Activated CD4-positive, alpha-beta memory T cell treated with anti-CD3 and anti-CD28 coated beads for 36 hours (primary cell): ENCODE measurements at regions of chr19 and their contacts with region 1.

Region 1: DNA sequence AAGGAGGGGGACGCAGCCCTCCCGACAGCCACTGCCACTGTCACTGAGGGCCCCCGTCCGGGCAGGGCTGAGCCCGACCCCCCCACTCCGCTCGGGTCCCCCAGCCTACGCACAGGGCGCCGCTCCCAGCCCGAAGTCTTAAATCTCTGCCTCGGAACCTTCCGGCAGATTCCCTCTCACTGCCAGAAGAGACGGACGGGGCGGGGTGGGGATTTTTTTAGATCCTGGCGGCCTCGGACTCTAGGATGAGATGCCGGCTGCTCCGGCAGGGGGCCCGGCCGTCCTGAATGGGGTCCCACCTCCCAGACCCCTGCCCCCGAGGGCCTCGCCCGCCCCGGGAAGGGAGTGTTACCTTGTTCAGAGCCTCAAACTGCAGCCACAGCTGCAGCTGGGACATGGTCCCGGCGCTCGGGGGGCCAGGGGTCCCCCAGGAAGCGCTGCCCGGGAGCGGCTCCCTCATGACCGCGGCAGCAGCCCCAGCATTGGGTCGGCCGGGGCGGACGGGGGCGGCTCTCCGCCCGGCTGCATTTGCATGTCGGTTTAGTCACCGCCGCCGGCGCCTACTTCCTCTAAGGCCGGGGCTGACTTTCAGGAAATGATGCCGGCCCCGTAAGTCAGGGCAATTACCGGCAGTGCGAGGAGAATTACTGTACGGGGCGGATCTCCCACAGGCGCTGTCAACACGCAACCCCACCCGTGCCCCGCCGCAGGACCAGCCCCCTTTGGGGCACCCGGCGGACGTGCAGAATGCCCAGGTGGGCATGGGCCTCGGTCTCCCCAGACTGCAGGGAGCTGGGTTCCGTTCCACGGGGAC is 28.2 kb downstream of the GPX4 start:
- DNase-seq: peak; percentile 96
- H3K4me3 Mint-ChIP-seq: peak overlapping the region; percentile 94
- H3K27ac Mint-ChIP-seq: peak overlapping the region; percentile 96
- H3K4me1 Mint-ChIP-seq: peaks cover 44% of the 10 kb centered on the region
- H3K27me3 Mint-ChIP-seq: no peaks in the 10 kb centered on the region

Region 2: DNA sequence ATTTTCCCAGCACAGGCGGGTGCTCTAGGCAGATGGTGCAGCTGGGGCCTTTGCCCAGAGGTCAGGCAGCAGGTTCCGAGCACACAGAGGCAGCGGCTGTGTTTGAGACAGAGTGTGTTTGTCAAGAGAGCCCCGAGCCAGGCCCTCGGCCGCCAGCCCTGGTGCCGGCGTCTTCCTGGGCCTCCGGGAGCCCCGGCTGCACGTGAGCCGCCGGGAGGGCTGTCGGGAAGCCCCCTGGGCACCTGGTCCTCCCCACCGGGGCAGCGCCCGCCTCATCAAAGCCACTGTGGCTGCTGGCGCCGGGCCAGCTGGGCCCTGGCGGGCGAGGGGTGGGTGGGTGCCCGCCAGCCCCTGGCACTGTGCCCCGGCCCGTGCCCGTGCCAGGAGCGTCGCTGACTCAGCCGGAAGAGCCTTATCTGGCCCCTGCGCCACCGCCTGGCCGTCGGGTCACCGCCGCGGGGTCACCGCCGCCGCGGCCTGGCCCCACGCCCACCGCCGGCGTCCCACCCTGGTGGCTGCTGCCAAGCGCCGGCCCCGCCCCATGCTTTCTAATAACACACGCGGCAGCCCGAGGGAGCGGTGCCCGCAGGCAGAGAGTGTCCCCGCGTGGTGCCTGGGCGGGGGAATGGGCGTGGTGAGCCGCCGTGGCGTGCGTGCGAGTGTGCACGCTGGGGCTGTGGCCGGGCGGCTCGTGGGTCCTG is 191.2 kb before region 1 on chr19:
- CTCF ChIA-PET with region 1: no interaction called
- POLR2A ChIA-PET with region 1: no interaction called
- intact Hi-C with region 1: no loop called
- DNase-seq: peak; percentile 65
- H3K4me3 Mint-ChIP-seq: peak overlapping the region; percentile 71
- H3K27ac Mint-ChIP-seq: no peak overlapping the region
- H3K4me1 Mint-ChIP-seq: peaks cover 24% of the 10 kb centered on the region
- H3K27me3 Mint-ChIP-seq: no peaks in the 10 kb centered on the region

Region 3: DNA sequence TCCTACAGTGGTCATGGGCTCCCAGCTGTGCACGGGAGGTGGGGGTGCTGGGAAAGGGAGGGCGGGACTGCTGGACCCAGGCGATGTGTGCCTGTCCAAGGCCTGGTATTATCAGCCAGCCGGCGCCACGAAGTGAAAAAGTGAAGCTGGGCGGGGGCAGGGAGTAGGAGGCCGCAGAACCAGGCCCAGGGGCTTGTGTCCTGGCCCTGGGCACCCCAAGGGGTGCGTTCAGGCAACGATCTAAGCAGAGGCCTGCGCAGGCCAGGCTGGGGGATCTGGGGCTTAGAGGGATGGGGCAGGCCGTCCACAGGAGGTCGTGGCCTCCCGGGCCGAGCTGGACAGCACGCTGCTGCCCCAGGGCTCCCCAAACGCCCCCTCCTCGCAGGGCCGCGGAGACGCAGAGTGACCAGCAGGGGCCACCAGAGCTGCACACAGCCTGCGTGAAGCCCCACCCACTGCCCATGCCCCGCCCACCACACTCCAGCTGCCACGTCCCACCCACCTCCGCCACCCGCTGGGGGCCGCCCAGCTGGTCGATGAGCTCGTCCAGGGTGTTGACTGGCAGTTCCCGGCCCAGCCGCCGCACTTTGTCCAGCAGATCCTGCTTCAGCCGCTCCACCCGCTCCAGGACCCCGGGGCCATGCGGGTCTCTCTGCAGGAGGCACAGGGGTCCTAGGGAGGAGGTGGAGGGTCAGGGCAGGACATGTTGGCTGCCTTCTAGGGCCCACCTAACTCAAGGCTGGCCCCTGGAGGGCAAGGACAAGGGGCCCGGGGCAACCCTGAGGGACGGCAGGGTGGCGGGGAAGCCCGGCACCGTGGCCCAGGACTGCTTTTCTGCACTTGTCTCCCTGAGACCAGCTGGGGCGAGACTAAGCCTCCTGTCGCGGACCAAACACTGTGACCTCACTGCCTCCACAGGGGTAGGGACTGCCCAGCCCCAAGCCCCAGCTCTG is 18.6 kb before region 1 on chr19:
- CTCF ChIA-PET with region 1: interaction called, 14 read pairs
- POLR2A ChIA-PET with region 1: interaction called, 7 read pairs
- intact Hi-C with region 1: no loop called
- DNase-seq: peak; percentile 89
- H3K4me3 Mint-ChIP-seq: no peak overlapping the region
- H3K27ac Mint-ChIP-seq: no peak overlapping the region
- H3K4me1 Mint-ChIP-seq: peaks cover 2% of the 10 kb centered on the region
- H3K27me3 Mint-ChIP-seq: no peaks in the 10 kb centered on the region

Region 4: DNA sequence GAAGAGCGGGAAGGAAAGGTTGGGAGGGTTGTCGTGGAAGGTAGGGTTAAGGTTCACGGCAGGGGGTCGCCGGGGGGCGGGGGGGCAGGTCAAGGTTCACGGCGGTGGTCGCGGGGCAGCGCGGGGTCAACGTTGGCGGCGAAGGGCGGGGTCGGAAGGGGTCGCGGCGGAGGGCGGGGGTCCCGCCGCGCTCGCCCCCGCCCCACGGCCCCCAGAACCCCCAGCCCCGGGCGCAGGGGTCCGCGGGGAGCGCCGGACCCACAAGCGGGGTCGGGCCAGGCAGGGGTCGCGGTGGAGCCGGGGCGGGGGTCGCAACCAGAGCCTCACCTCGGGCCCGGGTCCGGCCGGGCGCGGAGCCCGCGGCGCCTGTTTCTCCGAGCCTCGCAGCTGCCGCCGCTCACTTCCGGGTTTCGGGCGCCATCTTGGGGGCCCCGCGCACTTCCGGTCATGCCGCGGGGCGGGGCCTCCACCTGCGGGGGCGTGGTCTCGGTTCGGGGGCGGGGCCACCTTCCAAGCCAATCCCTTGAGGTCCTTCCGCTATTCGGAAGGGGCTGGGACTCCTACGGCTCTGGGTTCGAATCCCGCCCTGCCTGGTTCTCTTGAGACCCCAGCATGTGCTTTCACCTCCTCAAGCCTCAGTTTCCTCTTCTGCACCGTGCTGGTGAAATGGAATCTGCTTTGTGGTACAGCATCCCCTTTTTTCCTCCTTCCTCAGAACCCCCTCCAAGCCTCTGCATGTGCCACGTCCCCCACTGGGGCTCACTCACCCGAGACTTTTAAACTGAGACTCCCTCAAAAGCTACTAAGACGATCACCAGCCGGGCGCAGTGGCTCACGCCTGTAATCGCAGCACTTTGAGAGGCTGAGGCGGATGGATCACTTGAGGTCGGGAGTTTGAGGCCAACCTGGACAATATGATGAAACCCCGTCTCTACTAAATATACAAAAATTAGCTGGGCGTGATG is 42.2 kb after region 1 on chr19 and contains the start of gene SBNO2:
- CTCF ChIA-PET with region 1: interaction called, 6 read pairs
- POLR2A ChIA-PET with region 1: interaction called, 3 read pairs
- intact Hi-C with region 1: loop called (anchors 1 kb)
- DNase-seq: peak; percentile 96
- H3K4me3 Mint-ChIP-seq: peak within 1 kb of the TSS; percentile 89
- H3K27ac Mint-ChIP-seq: peak within 1 kb of the TSS; percentile 92
- H3K4me1 Mint-ChIP-seq: peaks cover 32% of the 10 kb centered on the region
- H3K27me3 Mint-ChIP-seq: no peaks in the 10 kb centered on the region
- total RNA-seq, gene SBNO2: 96.9 to 110 TPM

Region 5: DNA sequence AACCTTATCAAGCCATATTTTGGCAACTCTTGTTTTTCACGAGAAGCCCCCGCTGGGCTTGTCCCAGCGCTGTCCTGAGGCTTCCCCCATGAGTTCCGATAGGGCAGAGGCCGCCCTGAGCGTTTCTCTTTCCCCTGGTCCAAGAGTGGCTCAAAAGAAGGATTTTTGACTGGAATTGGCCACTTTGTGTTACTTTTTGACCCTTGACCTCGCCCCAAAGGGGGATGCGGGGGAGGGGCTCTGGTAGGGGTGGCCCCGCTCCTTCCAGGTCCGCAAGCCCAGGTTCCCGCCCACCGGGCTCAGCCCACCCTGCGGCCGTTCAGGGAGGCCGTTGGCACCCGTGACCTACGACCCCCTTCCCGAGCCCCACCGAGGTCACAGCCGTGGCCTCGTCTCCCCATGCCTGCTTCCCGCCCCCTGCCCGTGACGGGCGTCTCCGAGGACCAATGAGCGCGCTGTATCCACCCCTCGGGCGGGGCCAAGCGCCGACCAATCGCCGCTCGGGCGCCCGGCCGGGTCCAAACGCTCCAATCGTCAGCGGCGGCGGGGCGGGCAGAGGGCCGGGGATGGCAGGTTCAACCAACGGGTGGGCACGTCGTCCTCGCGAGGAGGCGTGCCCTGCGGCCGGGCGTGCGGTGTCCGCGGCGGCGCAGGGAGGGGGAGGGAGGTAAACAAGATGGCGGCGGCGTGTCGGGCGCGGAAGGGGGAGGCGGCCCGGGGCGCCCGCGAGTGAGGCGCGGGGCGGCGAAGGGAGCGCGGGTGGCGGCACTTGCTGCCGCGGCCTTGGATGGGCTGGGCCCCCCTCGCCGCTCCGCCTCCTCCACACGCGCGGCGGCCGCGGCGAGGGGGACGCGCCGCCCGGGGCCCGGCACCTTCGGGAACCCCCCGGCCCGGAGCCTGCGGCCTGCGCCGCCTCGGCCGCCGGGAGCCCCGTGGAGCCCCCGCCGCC is 73.4 kb after region 1 on chr19 and contains the start of gene STK11:
- CTCF ChIA-PET with region 1: no interaction called
- POLR2A ChIA-PET with region 1: interaction called, 3 read pairs
- intact Hi-C with region 1: loop called (anchors 1 kb)
- DNase-seq: peak; percentile 100
- H3K4me3 Mint-ChIP-seq: peak within 1 kb of the TSS; percentile 91
- H3K27ac Mint-ChIP-seq: peak within 1 kb of the TSS; percentile 81
- H3K4me1 Mint-ChIP-seq: peaks cover 24% of the 10 kb centered on the region
- H3K27me3 Mint-ChIP-seq: no peaks in the 10 kb centered on the region
- total RNA-seq, gene STK11: 66.4 to 74.3 TPM